Aorta (tissue), 5 donors: ENCODE measurements at regions of chr3 and their contacts with region 1.

Region 1: DNA sequence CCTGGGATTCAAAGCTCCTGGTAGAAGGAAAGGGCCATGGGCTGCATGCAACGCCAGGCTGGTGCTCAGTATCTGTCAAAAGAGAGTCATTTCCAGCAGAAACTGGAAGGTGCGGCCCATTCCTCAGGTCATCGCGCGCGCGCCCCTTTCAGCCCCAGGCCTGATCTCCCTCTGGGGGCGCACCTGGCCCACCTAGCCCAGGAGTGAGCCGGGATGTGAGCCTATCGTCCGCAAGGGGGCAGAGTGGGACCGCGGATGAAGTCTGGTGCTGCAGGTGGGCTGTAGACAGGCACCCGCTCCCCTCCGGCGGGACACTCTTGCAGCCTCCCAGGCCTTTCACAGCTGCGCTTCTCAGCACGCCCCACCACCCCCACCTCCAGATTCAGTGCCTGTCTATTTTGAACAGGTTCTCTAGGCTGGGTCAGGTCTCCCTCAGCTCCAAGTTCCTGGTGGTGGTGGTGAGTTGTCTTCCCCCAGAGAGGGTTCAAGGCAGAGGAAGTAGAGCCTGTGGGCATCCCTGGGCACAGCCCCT is 5.8 kb upstream of the RPL29 start:
- DNase-seq: peak; percentile 78 to 93
- ATAC-seq: peak; percentile 79
- H3K4me3 ChIP-seq: no peak overlapping the region
- H3K27ac ChIP-seq: no peak overlapping the region
- H3K4me1 ChIP-seq: no peaks in the 10 kb centered on the region
- H3K27me3 ChIP-seq: no peaks in the 10 kb centered on the region

Region 2: DNA sequence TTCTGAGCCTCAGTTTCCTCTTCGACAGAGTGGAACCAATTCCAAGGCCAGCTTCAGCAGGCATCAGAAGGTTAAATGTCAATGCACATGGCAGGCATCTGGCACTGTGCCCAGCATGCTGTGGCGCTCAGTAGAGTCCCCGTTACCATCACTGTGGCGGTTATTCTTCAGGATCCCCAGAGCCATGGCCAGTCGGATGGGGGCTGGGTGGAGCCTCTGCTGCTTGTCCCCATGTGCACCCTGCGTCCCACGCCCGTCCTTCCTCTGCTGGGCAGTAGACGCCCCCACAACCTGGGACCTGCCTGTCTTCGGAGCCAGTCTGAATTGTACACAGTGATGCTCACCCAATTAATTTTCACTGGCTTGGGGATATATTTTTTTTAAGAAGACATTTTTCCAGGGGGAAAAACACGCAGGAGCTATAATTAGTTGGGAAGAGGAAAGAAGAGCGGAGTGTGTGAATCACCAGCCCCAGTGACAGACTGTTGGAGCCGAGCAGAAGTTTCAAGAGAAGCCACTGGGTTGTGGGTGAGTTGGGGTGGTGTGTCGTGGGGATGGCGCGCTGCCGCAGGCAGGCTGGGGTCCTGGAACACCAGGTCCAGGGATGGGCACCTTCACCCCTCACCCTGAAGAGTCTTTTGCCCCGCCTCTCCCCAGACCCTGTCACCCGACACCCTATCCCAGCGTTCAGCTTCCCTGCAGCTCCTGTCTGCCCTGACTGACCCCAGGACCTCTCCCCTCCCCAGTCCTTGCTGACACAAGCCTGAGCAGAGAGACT is 21.0 kb after region 1 on chr3:
- intact Hi-C with region 1: no loop called
- DNase-seq: peak; percentile 69 to 85
- ATAC-seq: peak; percentile 31
- H3K4me3 ChIP-seq: no peak overlapping the region
- H3K27ac ChIP-seq: peak overlapping the region; percentile 2 to 30
- H3K4me1 ChIP-seq: peaks cover 0 to 12% of the 10 kb centered on the region in 2 donors
- H3K27me3 ChIP-seq: no peaks in the 10 kb centered on the region

Region 3: GRCh38 chr3:52123106-52123725 is 121.7 kb after region 1 on chr3:
- intact Hi-C with region 1: loop called (anchors 1 to 2 kb)
- DNase-seq: peak; percentile 82 to 93
- ATAC-seq: peak; percentile 87
- H3K4me3 ChIP-seq: no peak overlapping the region
- H3K27ac ChIP-seq: no peak overlapping the region
- H3K4me1 ChIP-seq: no peaks in the 10 kb centered on the region
- H3K27me3 ChIP-seq: no peaks in the 10 kb centered on the region

Region 4: DNA sequence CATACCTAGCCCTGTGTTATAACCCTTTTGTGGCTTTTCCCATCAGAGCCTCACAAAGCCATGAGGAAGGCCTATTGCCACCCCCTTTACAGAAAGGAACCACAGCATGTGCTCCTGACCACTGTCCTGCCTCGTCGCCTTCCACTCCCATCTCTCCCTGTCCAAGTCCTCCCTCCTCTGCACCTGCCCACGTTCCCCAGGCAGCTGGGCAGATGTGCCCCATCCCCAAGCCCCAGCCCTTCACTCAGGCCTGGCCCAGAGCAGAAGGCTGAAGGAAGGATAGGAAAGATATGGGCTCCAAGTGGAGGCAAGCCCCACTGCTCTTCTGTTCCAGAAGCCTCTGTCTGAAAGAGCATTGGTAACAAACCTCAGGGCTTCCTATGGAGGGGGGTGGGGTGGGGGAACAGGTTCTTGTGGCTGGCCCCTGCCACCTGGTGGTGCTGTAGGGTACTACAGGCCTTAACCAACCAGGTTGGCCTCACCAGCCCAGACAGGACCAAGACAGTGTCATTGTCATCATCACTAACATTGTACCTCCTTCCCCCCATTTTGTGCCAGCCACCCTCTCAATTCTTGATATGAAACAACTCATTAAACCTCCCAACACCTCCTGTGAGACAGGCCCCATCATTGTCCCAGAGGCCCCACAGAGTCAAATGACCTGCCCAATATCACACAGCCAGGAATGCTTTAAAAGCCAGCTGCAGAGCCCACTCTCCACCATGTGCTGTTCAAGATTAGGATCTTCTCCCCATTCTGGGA is 142.7 kb after region 1 on chr3:
- intact Hi-C with region 1: loop called (anchors 1 kb)
- DNase-seq: peak; percentile 90 to 93
- ATAC-seq: peak; percentile 89
- H3K4me3 ChIP-seq: no peak overlapping the region
- H3K27ac ChIP-seq: no peak overlapping the region
- H3K4me1 ChIP-seq: no peaks in the 10 kb centered on the region
- H3K27me3 ChIP-seq: no peaks in the 10 kb centered on the region

Region 5: GRCh38 chr3:52339612-52340011 is 338.1 kb after region 1 on chr3:
- intact Hi-C with region 1: loop called in 1 of 2 experiments (anchors 10 kb)
- DNase-seq: no peak
- ATAC-seq: no peak
- H3K4me3 ChIP-seq: no peak overlapping the region
- H3K27ac ChIP-seq: no peak overlapping the region
- H3K4me1 ChIP-seq: no peaks in the 10 kb centered on the region
- H3K27me3 ChIP-seq: no peaks in the 10 kb centered on the region